Left ventricle myocardium superior (tissue), 1 donor: ENCODE measurements at regions of chr1 and their contacts with region 1.

Region 1: GRCh38 chr1:201970334-201971159 is 11.9 kb upstream of the RNPEP start:
- DNase-seq: no peak
- ATAC-seq: peak; percentile 32

Region 2: GRCh38 chr1:201882665-201883132 is 87.8 kb before region 1 on chr1:
- intact Hi-C with region 1: loop called (anchors 5 kb)
- DNase-seq: no peak
- ATAC-seq: peak; percentile 5

Region 3: GRCh38 chr1:201895913-201896807 is 74.4 kb before region 1 on chr1:
- intact Hi-C with region 1: loop called (anchors 5 kb)
- DNase-seq: peak; percentile 93
- ATAC-seq: peak; percentile 84